Right cardiac atrium (tissue), 5 donors: ENCODE measurements at regions of chr22 and their contacts with region 1.

Region 1: GRCh38 chr22:17797721-17798559 is 23.7 kb upstream of the BID start:
- DNase-seq: peak in 1 of 3 donors; percentile 47
- ATAC-seq: no peak
- H3K4me3 ChIP-seq: no peak overlapping the region
- H3K27ac ChIP-seq: no peak overlapping the region
- H3K4me1 ChIP-seq: no peaks in the 10 kb centered on the region
- H3K27me3 ChIP-seq: no peaks in the 10 kb centered on the region

Region 2: DNA sequence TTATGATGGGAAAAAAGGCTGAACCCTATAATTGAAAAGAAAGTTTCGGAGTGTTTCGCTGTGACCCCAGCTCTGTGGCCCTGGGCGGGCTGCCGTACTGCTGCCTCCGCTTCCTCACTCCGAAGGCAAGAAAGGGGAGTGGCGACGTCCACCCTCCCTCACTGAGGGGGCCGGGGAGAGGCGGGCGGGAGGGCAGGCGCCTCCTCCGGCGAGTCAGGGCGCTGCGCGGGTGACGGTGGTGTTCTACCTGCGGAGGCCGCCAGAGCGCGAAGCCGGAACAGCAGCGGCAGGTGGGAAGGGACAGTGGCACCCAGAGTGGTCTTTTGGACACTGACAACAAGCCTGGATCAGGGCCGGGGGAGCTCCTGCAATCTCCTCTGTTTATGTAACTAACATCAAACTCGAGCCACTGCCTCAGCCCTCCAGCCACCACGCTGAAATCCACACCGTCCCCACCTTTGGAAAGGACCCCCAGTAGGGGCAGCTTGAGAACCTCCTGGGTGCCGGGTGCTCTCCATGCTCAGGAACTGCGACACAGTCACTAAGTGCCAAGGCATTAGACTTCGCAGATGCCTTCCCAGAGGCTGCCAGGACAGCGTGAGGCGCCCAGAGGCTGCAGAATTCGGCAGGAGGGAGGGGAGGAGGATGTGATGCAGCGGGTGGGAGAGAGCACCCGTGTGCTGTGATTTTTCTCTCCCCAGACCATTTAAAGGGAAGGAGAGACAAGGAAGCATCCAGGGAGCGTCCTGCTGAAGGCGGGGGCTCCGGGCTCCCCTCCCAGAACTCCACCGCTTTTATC is 49.2 kb before region 1 on chr22:
- intact Hi-C with region 1: loop called in 1 of 4 experiments (anchors 5 kb)
- DNase-seq: peak in 2 of 3 donors; percentile 67 to 73
- ATAC-seq: peak; percentile 54 to 60
- H3K4me3 ChIP-seq: no peak overlapping the region
- H3K27ac ChIP-seq: no peak overlapping the region
- H3K4me1 ChIP-seq: no peaks in the 10 kb centered on the region
- H3K27me3 ChIP-seq: no peaks in the 10 kb centered on the region

Region 3: GRCh38 chr22:18031695-18032454 is 233.9 kb after region 1 on chr22:
- intact Hi-C with region 1: no loop called
- DNase-seq: no peak
- ATAC-seq: no peak
- H3K4me3 ChIP-seq: no peak overlapping the region
- H3K27ac ChIP-seq: no peak overlapping the region
- H3K4me1 ChIP-seq: peaks cover 11% of the 10 kb centered on the region
- H3K27me3 ChIP-seq: no peaks in the 10 kb centered on the region